Activated T-helper 2 cell treated with anti-CD3 and anti-CD28 coated beads, Interferon-gamma antibody, Interleukin-2, Interleukin-4, amounts not matched to agents 10 μg/mL and 5 μg/mL and 100 μg/mL, durations not matched to agents 14 hours and 24 hours and 36 hours (primary cell): ENCODE measurements at regions of chr3 and their contacts with region 1.

Region 1: GRCh38 chr3:151168269-151169094 is 34.5 kb downstream of the GPR171 start:
- DNase-seq: peak; percentile 61
- H3K4me3 Mint-ChIP-seq: no peak overlapping the region
- H3K27ac Mint-ChIP-seq: no peak overlapping the region
- H3K4me1 Mint-ChIP-seq: peaks cover 43% of the 10 kb centered on the region
- H3K27me3 Mint-ChIP-seq: no peaks in the 10 kb centered on the region

Region 2: GRCh38 chr3:151183265-151183671 is 14.8 kb after region 1 on chr3:
- intact Hi-C with region 1: loop called (anchors 1 kb)
- DNase-seq: no peak
- H3K4me3 Mint-ChIP-seq: peak overlapping the region; percentile 57
- H3K27ac Mint-ChIP-seq: peak overlapping the region; percentile 73
- H3K4me1 Mint-ChIP-seq: peaks cover 41% of the 10 kb centered on the region
- H3K27me3 Mint-ChIP-seq: no peaks in the 10 kb centered on the region

Region 3: GRCh38 chr3:151205482-151205881 is 37.0 kb after region 1 on chr3:
- intact Hi-C with region 1: no loop called
- DNase-seq: no peak
- H3K4me3 Mint-ChIP-seq: peak overlapping the region; percentile 45
- H3K27ac Mint-ChIP-seq: peak overlapping the region; percentile 94
- H3K4me1 Mint-ChIP-seq: peaks cover 58% of the 10 kb centered on the region
- H3K27me3 Mint-ChIP-seq: no peaks in the 10 kb centered on the region

Region 4: GRCh38 chr3:151282921-151283320 is 114.4 kb after region 1 on chr3:
- intact Hi-C with region 1: loop called (anchors 1 kb)
- DNase-seq: no peak
- H3K4me3 Mint-ChIP-seq: no peak overlapping the region
- H3K27ac Mint-ChIP-seq: peak overlapping the region; percentile 19
- H3K4me1 Mint-ChIP-seq: peaks cover 47% of the 10 kb centered on the region
- H3K27me3 Mint-ChIP-seq: no peaks in the 10 kb centered on the region

Region 5: DNA sequence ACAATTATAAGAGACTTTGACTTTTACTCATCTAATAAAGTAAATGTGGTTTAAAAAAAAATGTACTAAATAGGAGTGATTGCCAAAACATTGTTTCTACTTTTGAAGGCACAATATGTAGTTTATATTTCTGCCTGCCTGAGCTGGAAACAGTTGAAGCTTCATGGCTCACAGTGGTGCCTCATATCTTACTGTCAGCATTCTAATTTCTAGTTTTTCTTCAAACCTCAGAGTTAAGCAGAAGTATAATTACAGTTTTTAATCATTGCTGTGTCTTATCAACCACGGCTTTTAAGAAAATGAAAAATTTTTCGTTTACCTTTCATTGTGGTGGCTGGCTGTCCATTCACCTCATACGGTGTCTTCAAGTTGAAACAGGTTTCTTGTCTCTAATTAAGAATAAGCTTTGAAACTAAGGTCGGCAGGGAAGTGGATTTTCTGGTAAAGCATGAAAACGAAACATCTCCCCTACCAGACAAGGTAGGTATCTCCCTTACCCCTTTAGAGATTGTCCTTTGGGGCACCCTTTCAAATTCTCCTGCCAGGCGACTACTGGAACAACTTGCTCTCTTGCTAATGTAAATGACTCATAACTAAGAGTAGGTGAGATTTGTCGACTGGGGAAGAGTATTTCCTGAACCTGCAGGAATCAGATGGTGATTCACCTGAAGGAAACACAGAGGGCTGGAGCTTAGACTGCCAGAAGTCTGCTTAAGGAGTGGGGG is 147.9 kb after region 1 on chr3 and contains the start of gene GPR87:
- intact Hi-C with region 1: loop called (anchors 2 kb)
- DNase-seq: no peak
- H3K4me3 Mint-ChIP-seq: peak within 1 kb of the TSS; percentile 55
- H3K27ac Mint-ChIP-seq: peak within 1 kb of the TSS; percentile 80
- H3K4me1 Mint-ChIP-seq: peaks cover 51% of the 10 kb centered on the region
- H3K27me3 Mint-ChIP-seq: no peaks in the 10 kb centered on the region
- total RNA-seq, gene GPR87: 1.1 and 1.2 TPM in 2 replicates

Region 6: DNA sequence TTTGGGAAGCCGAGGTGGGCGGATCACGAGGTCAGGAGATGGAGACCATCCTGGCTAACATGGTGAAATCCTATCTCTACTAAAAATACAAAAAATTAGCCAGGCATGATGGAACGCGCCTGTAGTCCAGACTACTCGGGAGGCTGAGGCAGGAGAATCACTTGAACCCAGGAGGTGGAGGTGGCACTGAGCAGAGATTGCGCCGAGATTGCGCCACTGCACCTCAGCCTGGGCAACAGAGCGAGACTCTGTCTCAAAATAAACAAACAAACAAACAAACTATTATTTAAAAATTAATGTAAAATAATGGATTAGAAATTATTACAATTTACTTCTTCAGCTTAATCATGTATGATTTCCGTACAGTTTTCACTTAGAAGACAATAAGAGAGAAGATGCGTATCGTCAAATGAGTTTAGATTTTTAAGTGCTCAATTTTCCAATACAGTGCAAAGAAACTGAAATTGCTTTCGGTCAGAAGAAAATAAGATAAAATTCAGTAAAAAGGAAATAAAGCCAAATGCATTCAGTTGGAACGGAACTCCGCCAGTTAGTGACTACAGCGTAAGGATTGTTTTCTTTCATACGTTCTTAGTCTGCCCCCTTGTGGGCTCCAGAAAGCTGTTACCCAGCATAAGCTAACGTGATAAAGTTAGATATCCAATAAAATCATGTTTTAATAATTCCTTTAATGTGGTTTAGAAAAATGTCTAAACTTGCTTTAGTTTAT is 670.3 kb after region 1 on chr3:
- intact Hi-C with region 1: loop called (anchors 5 kb)
- DNase-seq: no peak
- H3K4me3 Mint-ChIP-seq: no peak overlapping the region
- H3K27ac Mint-ChIP-seq: no peak overlapping the region
- H3K4me1 Mint-ChIP-seq: peaks cover 2% of the 10 kb centered on the region
- H3K27me3 Mint-ChIP-seq: peaks cover 39% of the 10 kb centered on the region

Region 7: DNA sequence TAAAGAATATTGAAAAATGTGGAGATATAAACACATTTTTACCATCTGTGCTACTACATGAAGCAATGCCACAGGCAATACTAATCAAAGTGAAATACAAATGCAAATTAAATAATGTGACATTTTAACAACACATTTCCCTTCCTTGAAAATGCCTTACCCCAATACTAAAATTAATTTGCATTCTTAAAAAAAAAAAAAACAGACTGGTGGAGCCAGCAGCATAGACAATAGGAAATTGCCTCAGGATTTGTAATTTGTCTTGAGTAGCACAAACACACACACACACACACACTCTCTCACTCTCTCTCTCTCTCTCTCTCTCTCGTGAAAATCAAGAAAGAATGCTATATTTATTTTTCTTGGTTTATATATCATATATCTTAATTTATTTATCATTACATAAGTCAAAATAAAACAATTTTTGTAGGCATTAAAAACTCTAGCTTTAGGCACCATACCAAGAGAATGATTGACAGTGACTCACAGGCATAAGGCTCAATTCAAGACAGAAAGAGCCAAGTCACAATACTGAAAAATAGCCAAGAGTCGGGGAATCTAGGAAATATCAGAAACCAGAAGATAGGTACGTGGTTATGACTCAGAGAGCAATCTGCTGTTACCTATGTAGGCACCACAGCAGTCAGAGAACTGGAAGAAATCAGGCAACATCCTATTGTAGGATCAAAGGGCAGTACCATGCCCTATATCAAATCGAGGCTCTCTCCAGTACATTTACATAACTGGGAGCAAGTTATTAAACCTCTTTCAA is 727.9 kb after region 1 on chr3:
- intact Hi-C with region 1: loop called (anchors 5 kb)
- DNase-seq: no peak
- H3K4me3 Mint-ChIP-seq: no peak overlapping the region
- H3K27ac Mint-ChIP-seq: no peak overlapping the region
- H3K4me1 Mint-ChIP-seq: peaks cover 35% of the 10 kb centered on the region
- H3K27me3 Mint-ChIP-seq: peaks cover 4% of the 10 kb centered on the region